Stomach (tissue), 19 donors: ENCODE measurements at regions of chr11 and their contacts with region 1.

Region 1: GRCh38 chr11:57527056-57527631 is 3.4 kb downstream of the TIMM10 start:
- DNase-seq: peak; percentile 85 to 89
- H3K4me3 ChIP-seq: no peak overlapping the region
- H3K27ac ChIP-seq: no peak overlapping the region
- H3K4me1 ChIP-seq: peaks cover 8 to 28% (median 18%) of the 10 kb centered on the region in 4 donors
- H3K27me3 ChIP-seq: no peaks in the 10 kb centered on the region
- CTCF ChIP-seq: peak in 5 of 7 experiments; percentile 87 to 97 (median 89)
- EP300 ChIP-seq: no peak
- POLR2A ChIP-seq: no peak

Region 2: GRCh38 chr11:57055764-57056163 is 471.4 kb before region 1 on chr11:
- intact Hi-C with region 1: no loop called
- DNase-seq: peak in 1 of 2 donors; percentile 9
- H3K4me3 ChIP-seq: no peak overlapping the region
- H3K27ac ChIP-seq: no peak overlapping the region
- H3K4me1 ChIP-seq: no peaks in the 10 kb centered on the region
- H3K27me3 ChIP-seq: no peaks in the 10 kb centered on the region
- CTCF ChIP-seq: no peak
- EP300 ChIP-seq: no peak
- POLR2A ChIP-seq: no peak

Region 3: DNA sequence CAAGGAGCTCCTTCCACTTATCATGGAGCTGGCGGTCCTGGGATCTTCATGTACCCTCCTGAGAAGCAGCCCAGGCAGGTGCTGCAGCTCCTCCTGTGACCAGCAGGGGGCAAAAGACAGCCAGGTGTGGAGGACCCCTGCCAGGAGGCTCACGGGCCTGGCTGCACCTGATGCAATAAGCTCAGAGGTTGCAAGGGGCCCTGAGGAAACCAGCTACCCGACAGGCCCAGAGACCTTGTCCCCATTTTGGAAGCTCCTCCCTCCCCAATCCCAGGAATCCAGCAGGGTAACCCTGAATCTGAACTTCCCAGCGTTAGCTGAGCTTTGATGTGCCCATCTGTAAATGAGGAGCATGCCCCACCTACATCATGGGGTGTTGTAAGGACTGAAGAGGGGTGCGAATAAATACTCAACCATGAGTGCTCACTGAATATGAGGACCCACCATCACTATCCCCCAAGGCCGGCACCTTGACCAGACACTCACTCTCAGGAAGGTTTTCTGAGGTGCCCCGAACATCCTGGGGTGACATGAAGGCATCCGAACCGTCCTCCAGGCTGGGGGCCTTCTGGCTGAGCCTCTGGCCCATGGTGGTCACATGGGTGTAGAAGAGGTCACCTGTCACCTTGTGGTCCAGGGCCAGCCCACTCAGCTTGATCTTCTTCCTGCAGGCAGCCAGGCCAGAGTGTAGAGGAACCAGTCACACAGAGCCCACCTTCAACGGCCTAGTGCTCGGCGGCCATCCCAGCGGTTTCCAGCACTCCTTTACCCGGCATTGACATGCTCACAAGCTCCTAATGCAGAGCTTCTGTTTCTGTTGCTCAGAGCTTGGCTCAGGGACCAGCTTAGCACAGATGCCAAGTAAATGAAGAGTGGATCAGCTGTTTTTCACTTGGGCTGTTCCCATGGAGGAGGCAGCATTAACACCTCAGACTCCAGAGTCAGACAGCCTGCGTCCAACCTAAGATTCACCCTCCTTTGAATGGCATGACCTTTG is 33.3 kb before region 1 on chr11:
- intact Hi-C with region 1: loop called (anchors 5 kb)
- DNase-seq: peak; percentile 83 to 85
- H3K4me3 ChIP-seq: no peak overlapping the region
- H3K27ac ChIP-seq: no peak overlapping the region
- H3K4me1 ChIP-seq: peaks cover 5 to 42% (median 25%) of the 10 kb centered on the region in 4 donors
- H3K27me3 ChIP-seq: no peaks in the 10 kb centered on the region
- CTCF ChIP-seq: peak in 5 of 7 experiments; percentile 82 to 97 (median 91)
- EP300 ChIP-seq: no peak
- POLR2A ChIP-seq: no peak

Region 4: GRCh38 chr11:57571606-57572005 is 44.5 kb after region 1 on chr11:
- intact Hi-C with region 1: no loop called
- DNase-seq: no peak
- H3K4me3 ChIP-seq: no peak overlapping the region
- H3K27ac ChIP-seq: no peak overlapping the region
- H3K4me1 ChIP-seq: peaks cover 3 to 23% (median 14%) of the 10 kb centered on the region in 4 donors
- H3K27me3 ChIP-seq: no peaks in the 10 kb centered on the region
- CTCF ChIP-seq: no peak
- EP300 ChIP-seq: no peak
- POLR2A ChIP-seq: no peak

Region 5: DNA sequence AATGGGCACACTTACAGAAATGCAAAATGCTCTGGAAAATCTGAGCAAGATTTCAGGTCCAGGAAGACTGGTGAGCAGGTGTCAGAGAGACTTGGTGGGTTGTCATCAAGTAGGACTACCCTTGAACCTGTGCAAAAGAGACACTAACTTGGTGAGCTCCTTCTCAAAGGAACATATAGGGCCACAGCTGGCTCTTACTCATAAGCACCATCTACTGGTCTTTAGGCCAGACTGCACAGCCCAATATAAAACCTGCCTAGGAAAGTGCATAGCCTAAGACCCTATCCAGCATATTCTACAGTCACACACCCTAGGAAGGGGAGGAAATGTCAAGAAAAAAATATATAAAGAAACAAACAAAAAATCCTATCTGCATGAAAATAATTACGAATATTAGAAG is 759.1 kb after region 1 on chr11:
- intact Hi-C with region 1: no loop called
- DNase-seq: peak in 1 of 2 donors; percentile 34
- H3K4me3 ChIP-seq: no peak overlapping the region
- H3K27ac ChIP-seq: no peak overlapping the region
- H3K4me1 ChIP-seq: no peaks in the 10 kb centered on the region
- H3K27me3 ChIP-seq: no peaks in the 10 kb centered on the region
- CTCF ChIP-seq: peak in 2 of 7 experiments; percentile 24 to 38
- EP300 ChIP-seq: no peak
- POLR2A ChIP-seq: no peak